OCI-LY7 (cell line): ENCODE measurements at regions of chr2 and their contacts with region 1.

Region 1: DNA sequence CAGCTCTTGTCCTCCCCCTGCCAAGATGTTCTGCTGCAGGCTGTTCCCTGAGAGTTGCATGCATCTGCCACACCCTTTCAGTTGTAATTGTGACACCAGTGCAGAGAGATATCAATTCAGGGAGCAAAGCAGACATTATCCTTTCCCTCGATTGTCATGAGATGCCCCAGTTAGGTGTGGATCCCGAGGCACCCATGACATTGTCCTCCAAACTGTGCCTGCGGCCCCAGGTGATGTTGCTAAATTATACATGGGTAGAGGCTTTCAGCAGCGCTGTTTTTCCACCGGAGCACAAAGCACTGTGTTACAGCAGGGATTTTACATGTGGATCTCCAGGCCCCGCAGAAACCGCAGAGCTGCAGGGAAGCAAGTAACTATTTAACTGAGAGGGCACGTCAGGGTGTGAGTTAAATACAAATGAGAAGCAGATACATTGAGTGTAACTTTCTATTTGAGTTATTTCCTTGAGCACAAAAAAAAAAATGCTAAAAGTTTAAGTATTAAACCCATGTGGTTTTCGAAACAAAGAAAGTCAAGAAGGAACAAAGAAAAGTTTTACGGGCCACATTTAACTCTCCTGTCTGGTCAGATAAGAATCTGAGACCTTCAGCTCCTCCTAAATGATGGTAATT is 90.3 kb upstream of the BCL2L11 start:
- DNase-seq: no peak
- H3K4me3 ChIP-seq: no peak overlapping the region
- H3K27ac ChIP-seq: no peak overlapping the region
- H3K4me1 ChIP-seq: peaks cover 54% of the 10 kb centered on the region
- CTCF ChIP-seq: no peak

Region 2: GRCh38 chr2:110979471-110980338 is 50.7 kb before region 1 on chr2:
- CTCF ChIA-PET with region 1: no interaction called
- POLR2A ChIA-PET with region 1: no interaction called
- intact Hi-C with region 1: no loop called
- DNase-seq: no peak
- H3K4me3 ChIP-seq: no peak overlapping the region
- H3K27ac ChIP-seq: no peak overlapping the region
- H3K4me1 ChIP-seq: no peaks in the 10 kb centered on the region
- CTCF ChIP-seq: no peak

Region 3: GRCh38 chr2:111671426-111672150 is 641.2 kb after region 1 on chr2:
- CTCF ChIA-PET with region 1: no interaction called
- POLR2A ChIA-PET with region 1: no interaction called
- intact Hi-C with region 1: loop called (anchors 10 kb)
- DNase-seq: peak; percentile 35
- H3K4me3 ChIP-seq: no peak overlapping the region
- H3K27ac ChIP-seq: peak overlapping the region; percentile 96
- H3K4me1 ChIP-seq: peaks cover 68% of the 10 kb centered on the region
- CTCF ChIP-seq: no peak